ENCODE measurements at regions of chr13 and their contacts with region 1.

Region 1: GRCh38 chr13:34667286-34668218 is 274.5 kb upstream of the NBEA start:
- DNase-seq: no peak

Region 2: DNA sequence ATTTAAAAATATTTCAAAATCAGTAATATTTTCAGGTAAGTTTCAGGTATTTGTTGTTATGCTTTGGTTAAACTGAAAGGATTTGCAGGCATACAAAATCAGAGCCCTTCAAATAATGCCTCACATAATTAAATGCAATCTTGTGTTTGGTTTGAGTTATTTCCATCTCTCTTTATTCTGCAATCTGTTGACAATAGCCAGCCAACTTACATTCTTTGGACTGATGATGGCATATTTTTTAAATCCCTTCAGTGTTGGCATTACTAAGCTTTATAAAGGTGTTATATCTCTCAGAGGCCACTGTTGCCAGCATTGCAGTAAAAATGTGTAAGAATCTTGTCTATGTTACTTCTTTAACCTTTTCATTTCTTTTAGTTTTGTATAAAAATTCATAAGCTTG is 1106.8 kb before region 1 on chr13:
- intact Hi-C with region 1: no loop called
- DNase-seq: no peak

Region 3: GRCh38 chr13:34201050-34201913 is 466.3 kb before region 1 on chr13:
- intact Hi-C with region 1: loop called in 1 of 2 experiments (anchors 5 kb)
- DNase-seq: no peak

Measured in posterior vena cava (tissue), 2 donors.